Activated B cell treated with CpG ODN at 0.5 μM for 24 hours (primary cell): ENCODE measurements at regions of chr15 and their contacts with region 1.

Region 1: GRCh38 chr15:34587717-34588674 is 4.5 kb upstream of the GOLGA8B start:
- DNase-seq: no peak
- ATAC-seq: peak; percentile 53
- H3K4me3 Mint-ChIP-seq: peak overlapping the region; percentile 67
- H3K27ac Mint-ChIP-seq: peak overlapping the region; percentile 68
- H3K4me1 Mint-ChIP-seq: peaks cover 11% of the 10 kb centered on the region
- H3K27me3 Mint-ChIP-seq: peaks cover 2% of the 10 kb centered on the region
- CTCF ChIP-seq: peak; percentile 41

Region 2: GRCh38 chr15:34056936-34057335 is 531.1 kb before region 1 on chr15:
- CTCF ChIA-PET with region 1: interaction called, 11 read pairs
- POLR2A ChIA-PET with region 1: no interaction called
- intact Hi-C with region 1: loop called (anchors 1 kb)
- DNase-seq: no peak
- ATAC-seq: no peak
- H3K4me3 Mint-ChIP-seq: no peak overlapping the region
- H3K27ac Mint-ChIP-seq: no peak overlapping the region
- H3K4me1 Mint-ChIP-seq: peaks cover 4% of the 10 kb centered on the region
- H3K27me3 Mint-ChIP-seq: no peaks in the 10 kb centered on the region
- CTCF ChIP-seq: no peak

Region 3: DNA sequence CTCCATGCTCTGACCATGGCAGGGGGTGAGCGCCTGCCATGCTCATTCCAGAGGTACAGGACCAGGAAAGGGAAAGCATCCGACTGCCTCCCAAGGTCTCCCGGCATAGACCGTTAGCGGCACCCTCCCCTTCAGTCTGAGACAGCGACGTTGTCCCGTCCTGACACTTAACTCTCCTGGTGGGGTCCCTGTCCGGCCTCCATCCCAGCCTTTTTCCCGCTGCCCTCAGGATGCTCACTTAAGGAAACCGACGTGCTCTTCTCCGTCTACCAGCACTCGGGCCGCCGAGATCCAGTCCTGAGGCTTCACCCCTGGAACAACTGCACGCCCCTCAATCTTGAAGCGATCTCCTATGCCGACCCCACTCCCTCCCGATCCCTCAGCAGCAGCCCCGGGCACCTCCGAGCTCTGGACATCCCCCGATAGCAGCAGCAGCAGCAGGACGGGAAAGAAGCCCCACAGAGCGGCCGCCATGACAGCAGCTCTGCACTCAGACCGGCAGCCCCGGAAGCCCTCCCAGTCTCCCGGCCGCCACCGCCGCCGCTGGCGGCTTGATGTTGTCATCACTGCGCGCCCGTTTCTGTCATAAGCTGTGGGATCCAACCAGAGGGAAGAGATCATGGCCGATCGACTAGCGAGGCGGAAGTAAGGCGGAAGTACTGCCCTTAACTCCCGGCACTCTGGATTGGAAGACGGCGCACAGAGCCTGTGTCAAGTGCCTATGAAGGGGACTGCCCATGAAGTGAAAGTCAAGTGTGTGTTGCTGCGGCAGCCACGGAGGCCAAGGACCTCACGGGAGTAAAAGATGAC is 486.4 kb before region 1 on chr15 and contains the starts of genes EMC7 and PGBD4:
- CTCF ChIA-PET with region 1: no interaction called
- POLR2A ChIA-PET with region 1: interaction called, 6 read pairs
- intact Hi-C with region 1: loop called (anchors 1 kb)
- DNase-seq: peak; percentile 98
- ATAC-seq: peak; percentile 98
- H3K4me3 Mint-ChIP-seq: peak within 1 kb of the TSS; percentile 99
- H3K27ac Mint-ChIP-seq: peak within 1 kb of the TSS; percentile 98
- H3K4me1 Mint-ChIP-seq: peaks cover 43% of the 10 kb centered on the region
- H3K27me3 Mint-ChIP-seq: no peaks in the 10 kb centered on the region
- CTCF ChIP-seq: no peak
- total RNA-seq, gene EMC7: 29.8 and 31.9 TPM in 2 replicates
- total RNA-seq, gene PGBD4: 4.8 and 5.3 TPM in 2 replicates

Region 4: GRCh38 chr15:34154725-34155204 is 433.2 kb before region 1 on chr15:
- CTCF ChIA-PET with region 1: no interaction called
- POLR2A ChIA-PET with region 1: no interaction called
- intact Hi-C with region 1: no loop called
- DNase-seq: no peak
- ATAC-seq: peak; percentile 68
- H3K4me3 Mint-ChIP-seq: no peak overlapping the region
- H3K27ac Mint-ChIP-seq: peak overlapping the region; percentile 80
- H3K4me1 Mint-ChIP-seq: peaks cover 7% of the 10 kb centered on the region
- H3K27me3 Mint-ChIP-seq: no peaks in the 10 kb centered on the region
- CTCF ChIP-seq: no peak

Region 5: DNA sequence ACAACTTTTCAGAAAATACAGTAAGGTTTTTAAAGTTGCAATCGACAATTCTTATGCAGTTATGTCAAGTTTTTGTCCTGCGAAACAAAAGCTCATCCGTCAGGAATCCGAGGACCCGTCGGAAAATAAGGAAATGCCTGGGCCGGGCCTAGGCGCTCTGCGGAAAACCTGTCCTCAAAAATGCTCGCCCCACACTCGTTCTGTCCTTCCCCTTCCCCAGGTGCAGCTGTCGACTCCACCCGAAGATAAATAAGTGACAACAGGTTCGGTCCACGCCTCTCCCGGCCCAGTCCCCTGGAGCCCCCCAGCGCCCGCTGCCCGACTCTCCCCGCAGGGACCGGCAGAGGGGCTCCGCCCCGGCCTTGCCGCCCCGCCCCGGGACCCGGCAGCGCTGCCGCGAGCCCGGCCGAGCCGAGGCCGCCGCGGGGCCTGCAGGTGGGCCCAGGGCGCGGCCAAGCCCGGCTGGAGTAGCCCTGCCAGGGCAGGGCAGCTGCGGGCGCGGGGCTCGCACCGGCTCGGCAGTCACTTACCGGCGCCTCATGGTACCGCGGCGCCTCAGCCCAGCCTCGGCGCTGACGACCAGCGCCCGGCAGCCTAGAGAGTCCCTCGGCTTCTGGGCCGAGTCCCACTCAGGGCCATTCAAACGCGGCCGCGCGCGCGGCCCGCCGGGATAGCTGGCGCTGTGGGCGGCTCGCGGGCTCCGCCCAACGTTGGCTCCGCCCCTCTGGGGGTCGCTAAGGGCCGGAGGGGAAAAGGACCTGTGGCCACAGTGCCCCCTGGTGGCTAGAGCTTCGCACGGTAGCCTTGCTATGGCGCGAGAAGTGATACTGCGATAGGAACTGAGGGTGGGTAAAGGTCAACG is 378.3 kb before region 1 on chr15 and contains the start of gene KATNBL1:
- CTCF ChIA-PET with region 1: interaction called, 3 read pairs
- POLR2A ChIA-PET with region 1: interaction called, 3 read pairs
- intact Hi-C with region 1: loop called (anchors 1 kb)
- DNase-seq: peak; percentile 97
- ATAC-seq: peak; percentile 93
- H3K4me3 Mint-ChIP-seq: peak within 1 kb of the TSS; percentile 89
- H3K27ac Mint-ChIP-seq: peak within 1 kb of the TSS; percentile 82
- H3K4me1 Mint-ChIP-seq: peaks cover 15% of the 10 kb centered on the region
- H3K27me3 Mint-ChIP-seq: no peaks in the 10 kb centered on the region
- CTCF ChIP-seq: no peak
- total RNA-seq, gene KATNBL1: 46.2 and 53.3 TPM in 2 replicates

Region 6: DNA sequence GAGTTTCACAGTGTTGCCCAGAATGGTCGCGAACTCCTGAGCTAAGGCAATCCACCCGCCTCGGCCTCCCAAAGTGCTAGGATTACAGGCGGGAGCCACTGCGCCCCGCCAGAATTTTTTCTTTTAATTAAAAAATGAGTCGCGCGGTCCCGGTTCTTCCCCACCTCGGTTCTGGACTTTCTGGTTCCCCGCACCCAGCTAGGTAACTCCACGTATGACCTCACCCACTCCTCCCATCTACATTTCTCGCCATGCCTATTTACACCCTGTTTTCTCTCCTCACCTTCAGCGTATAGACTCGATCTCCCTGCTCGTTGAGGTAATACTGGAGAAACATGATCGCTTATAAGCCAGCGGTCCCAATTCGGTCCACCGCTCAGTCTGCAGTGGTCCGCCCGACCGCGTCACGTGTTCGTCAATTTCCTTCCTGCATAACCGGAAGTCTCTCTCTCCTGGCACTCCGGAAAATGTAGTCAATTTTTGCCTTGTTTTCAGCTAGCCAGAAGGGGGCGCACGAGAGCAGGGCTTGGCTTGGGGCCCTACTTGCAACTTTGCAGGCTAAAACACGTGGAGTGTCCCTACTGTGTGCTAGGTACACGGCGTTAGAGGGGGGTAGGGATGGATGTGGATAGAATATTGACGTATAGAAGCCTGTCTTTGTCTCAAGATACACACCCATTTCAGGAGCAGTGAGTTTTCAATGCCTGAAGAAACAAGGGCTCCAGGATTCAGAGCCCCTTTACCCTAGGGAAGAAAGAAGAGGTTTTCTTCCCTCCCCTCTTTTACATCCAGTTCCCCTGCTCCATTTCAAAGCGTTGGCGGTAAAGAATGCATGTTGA is 245.0 kb before region 1 on chr15 and contains the starts of genes NOP10 and NUTM1:
- CTCF ChIA-PET with region 1: interaction called, 10 read pairs
- POLR2A ChIA-PET with region 1: no interaction called
- intact Hi-C with region 1: loop called (anchors 1 kb)
- DNase-seq: peak; percentile 89
- ATAC-seq: peak; percentile 90
- H3K4me3 Mint-ChIP-seq: no peak within 1 kb of the TSS
- H3K27ac Mint-ChIP-seq: peak within 1 kb of the TSS; percentile 74
- H3K4me1 Mint-ChIP-seq: peaks cover 25% of the 10 kb centered on the region
- H3K27me3 Mint-ChIP-seq: no peaks in the 10 kb centered on the region
- CTCF ChIP-seq: peak; percentile 57
- total RNA-seq, gene NOP10: 116 and 130 TPM in 2 replicates
- total RNA-seq, gene NUTM1: not detected in 2 replicates

Region 7: DNA sequence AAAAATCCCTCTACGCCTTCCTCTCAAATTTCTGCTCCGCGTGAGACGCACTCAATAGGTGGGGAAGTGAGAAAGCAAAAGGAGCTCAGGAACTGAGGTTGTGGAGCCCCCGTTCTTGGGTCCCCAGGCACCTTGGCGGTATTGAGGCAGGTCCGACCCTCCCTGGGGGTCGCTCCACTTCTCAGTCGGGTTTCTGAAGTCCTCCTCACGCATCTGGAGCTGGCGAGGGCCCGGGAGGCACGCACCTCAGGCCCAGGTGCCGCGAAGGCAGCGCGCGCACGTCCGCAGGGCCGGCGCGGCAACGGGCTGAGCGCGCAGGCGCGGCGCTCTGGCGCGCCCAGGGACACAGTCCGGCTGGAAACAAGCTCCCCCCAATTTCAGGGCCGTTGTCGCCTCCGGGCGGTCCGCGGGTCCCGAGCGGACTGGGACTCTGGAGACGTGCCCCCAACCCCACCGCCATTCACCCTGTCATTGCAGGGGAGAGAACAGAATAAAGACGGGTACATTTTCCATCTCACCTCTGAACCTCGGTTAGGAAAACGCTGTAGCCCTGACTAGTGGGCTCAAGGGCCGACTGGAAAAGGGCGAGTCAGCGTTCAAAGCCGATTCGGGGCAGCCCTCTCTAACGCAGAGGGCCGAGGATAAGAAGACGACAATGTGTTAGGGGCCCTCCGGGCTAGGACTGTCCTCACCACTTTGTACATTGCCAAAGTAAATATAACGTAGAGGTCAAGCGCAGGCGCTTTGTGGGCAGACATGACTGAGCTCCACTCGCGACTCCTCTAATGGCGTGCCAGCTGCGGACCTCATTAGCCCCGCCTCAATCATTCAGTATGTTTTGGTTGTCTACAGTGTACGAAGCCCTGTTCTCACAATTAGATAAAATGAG is 400.2 kb after region 1 on chr15 and contains the start of gene ZNF770:
- CTCF ChIA-PET with region 1: no interaction called
- POLR2A ChIA-PET with region 1: interaction called, 7 read pairs
- intact Hi-C with region 1: loop called (anchors 5 kb)
- DNase-seq: peak; percentile 92
- ATAC-seq: peak; percentile 85
- H3K4me3 Mint-ChIP-seq: peak within 1 kb of the TSS; percentile 98
- H3K27ac Mint-ChIP-seq: peak within 1 kb of the TSS; percentile 98
- H3K4me1 Mint-ChIP-seq: peaks cover 37% of the 10 kb centered on the region
- H3K27me3 Mint-ChIP-seq: no peaks in the 10 kb centered on the region
- CTCF ChIP-seq: no peak
- total RNA-seq, gene ZNF770: 46.8 TPM in 2 replicates